Activated CD4-positive, alpha-beta memory T cell treated with anti-CD3 and anti-CD28 coated beads for 36 hours (primary cell): ENCODE measurements at regions of chr6 and their contacts with region 1.

Region 1: GRCh38 chr6:156963712-156964700 is 186.8 kb downstream of the ARID1B start:
- DNase-seq: peak; percentile 79
- H3K4me3 Mint-ChIP-seq: no peak overlapping the region
- H3K27ac Mint-ChIP-seq: no peak overlapping the region
- H3K4me1 Mint-ChIP-seq: peaks cover 54% of the 10 kb centered on the region
- H3K27me3 Mint-ChIP-seq: no peaks in the 10 kb centered on the region

Region 2: GRCh38 chr6:157008568-157008967 is 44.6 kb after region 1 on chr6:
- CTCF ChIA-PET with region 1: no interaction called
- POLR2A ChIA-PET with region 1: no interaction called
- intact Hi-C with region 1: loop called (anchors 5 kb)
- DNase-seq: no peak
- H3K4me3 Mint-ChIP-seq: no peak overlapping the region
- H3K27ac Mint-ChIP-seq: peak overlapping the region; percentile 4
- H3K4me1 Mint-ChIP-seq: peaks cover 42% of the 10 kb centered on the region
- H3K27me3 Mint-ChIP-seq: no peaks in the 10 kb centered on the region

Region 3: DNA sequence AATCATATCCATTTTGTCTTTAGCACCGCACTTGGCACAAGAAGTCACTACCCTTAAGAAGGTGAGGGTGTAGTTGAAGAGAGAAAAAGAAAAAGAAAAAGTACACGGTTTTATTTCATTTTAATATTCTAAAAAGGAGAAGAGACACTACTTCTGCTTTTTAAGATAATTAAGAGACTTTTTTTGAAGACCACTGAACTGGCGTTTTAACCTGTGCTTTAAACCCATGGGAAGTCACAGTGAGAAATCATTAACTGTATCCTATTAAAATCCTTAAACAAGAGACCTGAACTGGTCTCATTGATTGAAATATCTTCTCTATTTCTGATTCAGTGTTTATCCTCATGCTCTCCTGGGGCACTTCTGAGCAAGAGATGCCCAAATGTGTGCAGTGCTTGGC is 115.8 kb after region 1 on chr6:
- CTCF ChIA-PET with region 1: no interaction called
- POLR2A ChIA-PET with region 1: no interaction called
- intact Hi-C with region 1: no loop called
- DNase-seq: no peak
- H3K4me3 Mint-ChIP-seq: no peak overlapping the region
- H3K27ac Mint-ChIP-seq: no peak overlapping the region
- H3K4me1 Mint-ChIP-seq: peaks cover 41% of the 10 kb centered on the region
- H3K27me3 Mint-ChIP-seq: no peaks in the 10 kb centered on the region